ENCODE measurements at regions of chr20 and their contacts with region 1.

Region 1: GRCh38 chr20:63223221-63224207 is 7.6 kb upstream of the YTHDF1 start:
- DNase-seq: peak; percentile 75
- H3K4me3 Mint-ChIP-seq: no peak overlapping the region
- H3K27ac Mint-ChIP-seq: no peak overlapping the region
- H3K4me1 Mint-ChIP-seq: peaks cover 24% of the 10 kb centered on the region
- H3K27me3 Mint-ChIP-seq: peaks cover 36% of the 10 kb centered on the region
- CTCF ChIP-seq: peak; percentile 98

Region 2: DNA sequence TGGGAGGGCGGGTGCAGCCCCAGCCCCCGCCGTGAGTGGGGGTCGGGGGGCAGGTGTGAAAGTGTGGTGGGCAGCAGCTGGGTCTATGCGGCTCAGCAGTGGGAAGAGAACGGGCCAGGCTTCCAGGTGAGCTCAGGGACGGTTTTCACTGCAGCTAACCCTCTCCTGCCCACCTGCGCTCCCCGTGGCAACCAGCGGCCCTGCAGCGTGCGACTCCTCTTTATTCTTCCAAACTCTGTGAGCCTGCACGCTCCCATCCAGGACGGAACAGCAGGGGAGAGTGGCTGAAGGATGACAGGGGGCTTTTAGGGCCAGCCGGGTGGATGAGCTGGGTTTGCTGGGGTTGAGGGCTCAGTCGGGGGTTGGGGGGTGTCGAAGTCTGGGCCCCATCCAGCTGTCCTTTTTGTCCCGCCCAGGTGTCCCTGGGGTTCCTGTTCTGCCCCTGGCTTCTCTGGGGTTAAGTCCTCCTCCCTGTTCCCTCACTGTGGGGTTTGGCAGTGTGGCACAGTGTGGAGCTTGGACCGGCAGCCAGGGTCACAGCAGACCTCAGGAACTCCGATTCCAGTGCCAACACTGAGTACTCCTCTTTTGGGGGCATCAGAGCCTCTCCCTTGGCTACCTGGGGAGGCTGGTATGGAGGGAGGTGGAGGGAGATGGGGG is 11.4 kb after region 1 on chr20:
- CTCF ChIA-PET with region 1: interaction called, 68 read pairs
- intact Hi-C with region 1: no loop called
- DNase-seq: peak; percentile 85
- H3K4me3 Mint-ChIP-seq: no peak overlapping the region
- H3K27ac Mint-ChIP-seq: peak overlapping the region; percentile 10
- H3K4me1 Mint-ChIP-seq: peaks cover 39% of the 10 kb centered on the region
- H3K27me3 Mint-ChIP-seq: no peaks in the 10 kb centered on the region
- CTCF ChIP-seq: peak; percentile 76

Region 3: DNA sequence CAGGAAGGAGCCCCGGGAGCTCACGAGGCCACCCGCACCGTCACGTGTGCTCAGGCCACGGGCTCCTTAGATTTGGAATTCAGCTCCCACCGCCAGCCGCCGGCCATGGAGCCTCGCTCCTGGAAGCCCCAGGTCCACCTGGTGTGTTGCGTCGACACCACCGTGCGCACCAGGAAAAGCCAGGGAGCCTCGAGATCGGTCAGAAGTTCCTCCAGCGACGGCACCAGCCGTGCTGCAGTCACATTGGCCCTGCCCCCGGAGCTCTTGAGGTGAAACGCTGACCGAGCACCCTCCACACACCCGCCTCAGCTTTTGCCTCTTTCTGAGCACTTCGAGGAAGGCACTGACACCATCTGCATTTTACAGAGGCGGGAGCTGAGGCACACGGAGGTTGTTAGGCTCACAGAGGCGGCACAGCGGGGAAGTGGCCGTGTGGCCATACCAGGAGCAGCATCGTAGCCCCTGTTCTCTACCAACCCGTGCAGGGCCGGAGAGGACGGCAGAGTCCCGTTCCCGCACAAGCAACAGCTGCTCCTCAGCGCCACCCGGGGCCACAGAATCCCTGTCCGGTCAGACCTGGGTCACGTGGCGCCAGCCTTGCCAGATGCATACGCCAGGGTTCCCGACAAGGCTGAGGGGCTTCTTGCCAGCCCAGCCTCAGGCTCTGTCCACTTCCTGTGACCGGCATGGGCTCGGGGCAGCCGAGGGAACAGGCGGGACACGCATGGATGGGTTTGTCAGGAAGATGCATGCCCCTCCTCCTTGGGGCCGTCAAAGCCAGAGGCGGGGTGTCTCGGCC is 23.2 kb after region 1 on chr20:
- CTCF ChIA-PET with region 1: interaction called, 18 read pairs
- intact Hi-C with region 1: no loop called
- DNase-seq: peak; percentile 52
- H3K4me3 Mint-ChIP-seq: no peak overlapping the region
- H3K27ac Mint-ChIP-seq: no peak overlapping the region
- H3K4me1 Mint-ChIP-seq: no peaks in the 10 kb centered on the region
- H3K27me3 Mint-ChIP-seq: peaks cover 95% of the 10 kb centered on the region
- CTCF ChIP-seq: no peak

Region 4: GRCh38 chr20:63253438-63254236 is 30.1 kb after region 1 on chr20:
- CTCF ChIA-PET with region 1: interaction called, 18 read pairs
- intact Hi-C with region 1: no loop called
- DNase-seq: no peak
- H3K4me3 Mint-ChIP-seq: no peak overlapping the region
- H3K27ac Mint-ChIP-seq: no peak overlapping the region
- H3K4me1 Mint-ChIP-seq: no peaks in the 10 kb centered on the region
- H3K27me3 Mint-ChIP-seq: peaks cover 94% of the 10 kb centered on the region
- CTCF ChIP-seq: no peak

Region 5: DNA sequence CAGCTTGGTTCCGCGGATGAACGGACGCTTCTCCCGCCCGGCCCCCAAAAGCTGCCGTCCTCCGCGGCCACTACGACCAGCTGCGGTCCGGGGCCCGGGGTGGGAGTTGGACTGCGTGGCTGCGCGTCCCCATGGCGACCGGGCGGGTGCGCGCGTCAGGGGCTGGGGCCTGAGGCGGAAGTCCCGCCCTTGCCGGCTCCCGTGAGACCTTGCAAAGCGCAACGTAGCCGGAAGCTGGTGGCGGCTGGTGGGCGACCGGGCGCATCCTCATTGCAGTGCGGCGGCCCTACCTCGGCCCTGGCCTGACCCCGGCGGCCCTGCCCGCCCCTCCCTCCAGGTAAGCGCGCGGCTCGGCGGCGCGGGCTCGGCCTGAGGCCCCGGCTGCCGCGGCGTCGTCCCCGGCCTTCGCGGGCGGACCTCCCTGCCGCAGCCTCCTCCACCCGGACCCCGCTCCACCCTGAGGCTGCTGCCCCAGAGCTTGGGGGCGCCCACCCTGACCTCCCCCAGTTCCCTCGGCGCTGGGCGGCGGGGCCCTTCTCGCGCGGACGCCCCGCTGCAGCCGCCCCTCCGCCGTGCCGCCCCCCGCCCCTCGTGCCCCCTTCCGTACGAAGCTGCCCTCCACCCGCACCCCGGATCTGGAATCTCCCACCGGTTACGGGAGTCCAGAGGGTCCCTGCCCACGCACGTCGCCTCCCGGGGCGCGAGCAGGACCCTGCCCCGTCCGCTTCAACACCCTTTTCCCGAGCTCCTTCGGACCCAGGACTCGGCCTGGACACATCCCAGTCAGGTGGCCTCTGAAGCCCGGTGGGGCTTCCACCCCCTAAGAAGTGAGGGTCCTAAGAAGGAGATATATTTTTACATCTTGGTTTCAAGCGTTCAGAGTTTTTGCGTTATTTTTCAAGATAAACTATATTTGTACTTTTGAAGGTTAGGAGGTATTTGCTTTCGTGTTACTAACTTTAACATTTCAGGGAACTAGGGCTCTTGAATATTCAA is 49.4 kb after region 1 on chr20 and contains the start of gene ARFGAP1:
- CTCF ChIA-PET with region 1: interaction called, 11 read pairs
- intact Hi-C with region 1: no loop called
- DNase-seq: peak; percentile 97
- H3K4me3 Mint-ChIP-seq: peak within 1 kb of the TSS; percentile 81
- H3K27ac Mint-ChIP-seq: peak within 1 kb of the TSS; percentile 76
- H3K4me1 Mint-ChIP-seq: peaks cover 30% of the 10 kb centered on the region
- H3K27me3 Mint-ChIP-seq: peaks cover 11% of the 10 kb centered on the region
- CTCF ChIP-seq: no peak
- total RNA-seq, gene ARFGAP1: 127 and 146 TPM in 2 replicates

Region 6: DNA sequence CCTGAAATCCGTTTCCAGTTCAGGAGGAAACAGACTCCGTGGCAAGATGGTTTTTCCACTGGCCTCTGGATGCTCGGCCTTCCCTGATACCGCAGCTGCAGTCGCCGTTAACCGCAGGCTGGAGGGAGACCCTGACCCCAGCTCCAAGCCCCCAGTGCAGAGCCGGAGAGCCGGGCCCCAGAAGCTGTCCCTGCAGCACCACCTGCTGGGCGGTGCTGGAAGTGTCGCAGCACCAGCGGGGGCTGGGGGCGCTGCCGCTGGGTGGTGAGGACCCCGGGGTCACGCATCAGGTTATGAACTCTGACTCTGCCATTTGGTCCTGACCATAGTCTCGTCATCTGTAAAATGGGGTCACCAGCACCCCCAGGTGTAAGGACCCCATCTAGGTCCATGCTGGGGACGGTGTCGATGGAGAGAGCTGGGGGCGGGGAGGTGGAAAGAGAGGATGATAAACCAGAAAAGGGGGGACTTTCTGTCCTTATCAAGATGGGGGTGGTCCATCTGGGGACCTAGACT is 158.4 kb after region 1 on chr20:
- CTCF ChIA-PET with region 1: interaction called, 49 read pairs
- intact Hi-C with region 1: loop called (anchors 5 kb)
- DNase-seq: peak; percentile 65
- H3K4me3 Mint-ChIP-seq: no peak overlapping the region
- H3K27ac Mint-ChIP-seq: no peak overlapping the region
- H3K4me1 Mint-ChIP-seq: no peaks in the 10 kb centered on the region
- H3K27me3 Mint-ChIP-seq: peaks cover 88% of the 10 kb centered on the region
- CTCF ChIP-seq: peak; percentile 100